ENCODE measurements at regions of chr2 and their contacts with region 1.

Region 1: DNA sequence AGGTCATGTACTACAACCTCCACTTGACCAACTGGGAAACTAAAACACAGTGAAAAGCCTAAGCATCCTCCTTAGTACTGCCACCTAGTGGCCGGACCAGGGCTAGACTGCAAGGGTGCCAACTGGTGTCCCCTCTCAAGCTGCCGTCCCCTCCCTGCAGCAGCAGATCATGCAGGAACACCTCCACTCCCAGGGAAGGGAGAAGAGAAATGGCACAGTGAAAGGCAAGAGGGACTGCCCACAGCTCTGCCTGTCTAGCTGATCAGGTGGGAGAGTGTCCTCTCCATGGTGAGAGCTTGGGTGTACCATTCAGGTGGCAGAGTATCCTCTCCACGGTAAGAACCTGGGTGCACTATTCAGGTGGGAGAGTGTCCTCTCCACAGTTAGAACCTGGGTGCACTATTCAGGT is 78.1 kb downstream of the AAK1 start:
- DNase-seq: peak; percentile 36 to 67 (median 48)
- H3K4me3 ChIP-seq: no peak overlapping the region
- H3K4me3 Mint-ChIP-seq: peak overlapping the region; percentile 52 to 79 (median 70)
- H3K27ac ChIP-seq: peak overlapping the region; percentile 11
- H3K27ac Mint-ChIP-seq: peak overlapping the region; percentile 57 to 90 (median 80)
- H3K4me1 ChIP-seq: peaks cover 96% of the 10 kb centered on the region
- H3K4me1 Mint-ChIP-seq: peaks cover 70 to 99% (median 84%) of the 10 kb centered on the region in 4 donors
- H3K27me3 ChIP-seq: no peaks in the 10 kb centered on the region
- H3K27me3 Mint-ChIP-seq: no peaks in the 10 kb centered on the region

Region 2: GRCh38 chr2:69538872-69539548 is 26.4 kb before region 1 on chr2:
- CTCF ChIA-PET with region 1: interaction called, 11 read pairs
- POLR2A ChIA-PET with region 1: no interaction called
- intact Hi-C with region 1: no loop called
- DNase-seq: no peak
- H3K4me3 ChIP-seq: no peak overlapping the region
- H3K4me3 Mint-ChIP-seq: no peak overlapping the region
- H3K27ac ChIP-seq: no peak overlapping the region
- H3K27ac Mint-ChIP-seq: peak overlapping the region in 6 of 7 donors; percentile 10 to 70 (median 48)
- H3K4me1 ChIP-seq: peaks cover 23% of the 10 kb centered on the region
- H3K4me1 Mint-ChIP-seq: peaks cover 27 to 44% (median 36%) of the 10 kb centered on the region in 4 donors
- H3K27me3 ChIP-seq: no peaks in the 10 kb centered on the region
- H3K27me3 Mint-ChIP-seq: no peaks in the 10 kb centered on the region

Region 3: DNA sequence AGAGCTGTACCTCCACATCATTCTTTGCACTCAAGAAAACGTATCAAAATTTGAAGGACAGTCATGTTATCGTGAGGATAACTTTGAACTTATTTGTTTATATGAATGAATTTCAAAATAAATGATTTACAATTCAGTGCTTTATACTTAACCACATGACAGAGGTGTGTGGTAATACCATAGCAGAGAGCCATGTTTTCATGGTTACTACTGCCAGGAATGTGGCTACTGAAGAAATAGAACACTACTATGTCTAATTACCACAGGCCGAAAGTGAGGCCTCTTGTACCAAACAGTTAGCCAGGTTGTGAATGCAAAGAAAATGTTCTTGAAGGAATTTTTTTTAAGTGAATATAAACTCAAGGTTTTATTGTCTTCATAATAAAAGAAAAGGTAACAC is 28.9 kb after region 1 on chr2:
- CTCF ChIA-PET with region 1: interaction called, 220 read pairs
- POLR2A ChIA-PET with region 1: interaction called, 3 read pairs
- intact Hi-C with region 1: no loop called
- DNase-seq: no peak
- H3K4me3 ChIP-seq: no peak overlapping the region
- H3K4me3 Mint-ChIP-seq: peak overlapping the region in 1 of 8 donors; percentile 4
- H3K27ac ChIP-seq: no peak overlapping the region
- H3K27ac Mint-ChIP-seq: peak overlapping the region in 4 of 7 donors; percentile 6 to 62 (median 30)
- H3K4me1 ChIP-seq: peaks cover 80% of the 10 kb centered on the region
- H3K4me1 Mint-ChIP-seq: peaks cover 59 to 88% (median 78%) of the 10 kb centered on the region in 4 donors
- H3K27me3 ChIP-seq: no peaks in the 10 kb centered on the region
- H3K27me3 Mint-ChIP-seq: no peaks in the 10 kb centered on the region

Region 4: DNA sequence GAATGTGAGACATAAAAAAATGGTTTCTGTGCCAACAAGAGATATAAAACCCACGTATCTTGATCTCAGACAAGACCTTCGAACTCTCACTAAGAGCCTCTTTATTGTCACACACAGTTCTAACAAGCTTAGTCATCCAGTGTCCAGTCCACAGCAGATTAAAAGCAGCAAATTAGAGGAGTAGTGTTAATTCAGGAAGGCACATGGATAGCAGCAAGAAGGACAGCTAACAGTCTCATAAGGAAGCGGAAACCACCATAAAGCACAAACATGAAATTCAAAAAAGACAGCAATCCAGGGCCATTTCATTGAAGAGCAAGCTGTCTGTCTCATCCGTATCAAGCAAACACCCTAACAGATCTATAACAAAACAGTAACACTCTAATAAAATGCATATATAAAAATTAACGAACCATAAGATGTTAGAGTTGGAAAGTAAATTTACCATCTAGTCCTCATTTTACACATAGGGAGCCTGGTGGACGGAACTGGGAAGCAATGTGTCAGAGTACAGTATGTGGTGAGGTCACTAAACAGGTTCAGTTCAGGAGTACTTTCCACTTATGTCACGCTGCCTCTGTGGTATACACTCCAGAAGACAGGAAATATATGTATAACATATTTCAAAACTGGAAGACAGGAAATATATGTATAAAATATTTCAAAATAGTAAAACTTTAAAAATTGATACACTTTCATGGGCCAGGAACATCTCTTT is 59.8 kb after region 1 on chr2:
- CTCF ChIA-PET with region 1: interaction called, 58 read pairs
- POLR2A ChIA-PET with region 1: interaction called, 6 read pairs
- intact Hi-C with region 1: no loop called
- DNase-seq: peak in 1 of 5 donors; percentile 14
- H3K4me3 ChIP-seq: no peak overlapping the region
- H3K4me3 Mint-ChIP-seq: no peak overlapping the region
- H3K27ac ChIP-seq: no peak overlapping the region
- H3K27ac Mint-ChIP-seq: no peak overlapping the region
- H3K4me1 ChIP-seq: peaks cover 90% of the 10 kb centered on the region
- H3K4me1 Mint-ChIP-seq: peaks cover 0 to 20% (median 14%) of the 10 kb centered on the region in 4 donors
- H3K27me3 ChIP-seq: no peaks in the 10 kb centered on the region
- H3K27me3 Mint-ChIP-seq: no peaks in the 10 kb centered on the region

Region 5: GRCh38 chr2:69652221-69652651 is 86.8 kb after region 1 on chr2:
- CTCF ChIA-PET with region 1: interaction called, 46 read pairs
- POLR2A ChIA-PET with region 1: interaction called, 5 read pairs
- intact Hi-C with region 1: no loop called
- DNase-seq: no peak
- H3K4me3 ChIP-seq: no peak overlapping the region
- H3K4me3 Mint-ChIP-seq: peak overlapping the region in 5 of 8 donors; percentile 35 to 80 (median 52)
- H3K27ac ChIP-seq: no peak overlapping the region
- H3K27ac Mint-ChIP-seq: peak overlapping the region in 6 of 7 donors; percentile 26 to 84 (median 56)
- H3K4me1 ChIP-seq: peaks cover 56% of the 10 kb centered on the region
- H3K4me1 Mint-ChIP-seq: peaks cover 22 to 70% (median 45%) of the 10 kb centered on the region in 4 donors
- H3K27me3 ChIP-seq: no peaks in the 10 kb centered on the region
- H3K27me3 Mint-ChIP-seq: no peaks in the 10 kb centered on the region

Region 6: DNA sequence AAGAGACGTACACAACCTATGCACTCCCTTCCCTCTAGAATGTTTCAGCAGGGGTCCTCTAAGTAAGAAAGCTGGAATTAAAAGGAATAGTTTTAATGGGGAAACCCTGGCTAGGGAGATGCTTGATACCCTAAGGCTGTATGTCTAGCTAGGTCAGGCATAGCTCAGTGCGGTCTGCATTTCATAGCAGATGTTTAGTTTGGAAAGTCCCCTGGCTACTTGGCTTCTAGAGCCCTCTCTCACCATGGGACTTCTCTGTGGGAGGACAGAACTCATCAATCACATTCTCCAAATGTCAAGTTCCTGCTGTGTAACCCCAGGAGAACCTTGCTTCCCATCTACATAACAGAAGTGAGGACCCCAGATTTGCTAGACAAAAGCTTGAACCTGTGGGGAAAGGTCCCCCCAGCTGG is 152.4 kb after region 1 on chr2:
- CTCF ChIA-PET with region 1: interaction called, 138 read pairs
- POLR2A ChIA-PET with region 1: interaction called, 3 read pairs
- intact Hi-C with region 1: loop called (anchors 1 kb)
- DNase-seq: no peak
- H3K4me3 ChIP-seq: no peak overlapping the region
- H3K4me3 Mint-ChIP-seq: no peak overlapping the region
- H3K27ac ChIP-seq: no peak overlapping the region
- H3K27ac Mint-ChIP-seq: no peak overlapping the region
- H3K4me1 ChIP-seq: peaks cover 9% of the 10 kb centered on the region
- H3K4me1 Mint-ChIP-seq: peaks cover 8 to 12% (median 10%) of the 10 kb centered on the region in 4 donors
- H3K27me3 ChIP-seq: no peaks in the 10 kb centered on the region
- H3K27me3 Mint-ChIP-seq: no peaks in the 10 kb centered on the region